ENCODE measurements at regions of chr3 and their contacts with region 1.

Region 1: DNA sequence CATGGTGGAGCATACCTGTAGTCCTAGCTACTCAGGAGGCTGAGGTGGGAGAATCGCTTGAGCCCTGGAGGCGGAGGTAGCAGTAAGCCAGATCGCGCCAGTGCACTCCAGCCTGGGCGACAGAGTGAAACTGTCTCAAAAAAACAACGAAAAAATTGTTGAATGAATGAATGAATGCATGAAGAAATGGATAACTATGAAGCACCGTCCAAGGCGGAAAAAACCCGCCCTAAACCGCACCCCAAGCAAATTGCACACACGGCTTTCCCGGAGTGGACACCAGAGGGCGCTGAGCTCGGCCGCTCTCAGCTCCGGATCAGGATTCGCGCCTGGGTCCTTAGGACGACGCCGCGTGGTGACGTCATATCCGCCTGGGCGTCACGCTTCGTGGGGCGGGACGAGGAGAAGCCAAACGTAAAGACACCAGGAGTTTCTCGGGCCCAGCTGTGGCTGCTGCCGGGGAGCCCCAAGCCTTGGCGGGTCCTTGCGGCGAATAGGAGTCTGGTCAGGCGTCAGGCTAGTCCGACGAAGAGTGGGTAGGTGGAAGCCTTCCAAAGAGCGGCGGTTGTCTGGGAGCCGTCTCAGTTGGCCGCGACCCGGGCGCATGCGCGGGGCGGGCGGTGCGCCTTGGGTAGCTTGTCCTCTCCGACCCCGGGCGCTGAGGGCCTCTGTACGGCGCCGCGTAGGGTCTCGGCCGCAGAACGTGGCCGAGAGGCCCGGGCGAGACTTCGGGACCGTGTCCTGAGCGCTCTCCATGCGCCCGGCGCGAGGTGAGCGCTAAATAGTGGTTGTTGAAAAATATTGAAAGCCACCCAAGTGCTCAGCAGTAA is at the starts of genes HTD2 and RPP14:
- DNase-seq: peak; percentile 97
- ATAC-seq: peak; percentile 88
- H3K4me3 Mint-ChIP-seq: peak within 1 kb of the TSS; percentile 98
- H3K27ac Mint-ChIP-seq: peak within 1 kb of the TSS; percentile 99
- H3K4me1 Mint-ChIP-seq: peaks cover 29% of the 10 kb centered on the region
- H3K27me3 Mint-ChIP-seq: peaks cover 3% of the 10 kb centered on the region
- CTCF ChIP-seq: no peak
- total RNA-seq, gene HTD2: 11.4 TPM in 2 replicates
- total RNA-seq, gene RPP14: 17.5 and 17.7 TPM in 2 replicates

Region 2: DNA sequence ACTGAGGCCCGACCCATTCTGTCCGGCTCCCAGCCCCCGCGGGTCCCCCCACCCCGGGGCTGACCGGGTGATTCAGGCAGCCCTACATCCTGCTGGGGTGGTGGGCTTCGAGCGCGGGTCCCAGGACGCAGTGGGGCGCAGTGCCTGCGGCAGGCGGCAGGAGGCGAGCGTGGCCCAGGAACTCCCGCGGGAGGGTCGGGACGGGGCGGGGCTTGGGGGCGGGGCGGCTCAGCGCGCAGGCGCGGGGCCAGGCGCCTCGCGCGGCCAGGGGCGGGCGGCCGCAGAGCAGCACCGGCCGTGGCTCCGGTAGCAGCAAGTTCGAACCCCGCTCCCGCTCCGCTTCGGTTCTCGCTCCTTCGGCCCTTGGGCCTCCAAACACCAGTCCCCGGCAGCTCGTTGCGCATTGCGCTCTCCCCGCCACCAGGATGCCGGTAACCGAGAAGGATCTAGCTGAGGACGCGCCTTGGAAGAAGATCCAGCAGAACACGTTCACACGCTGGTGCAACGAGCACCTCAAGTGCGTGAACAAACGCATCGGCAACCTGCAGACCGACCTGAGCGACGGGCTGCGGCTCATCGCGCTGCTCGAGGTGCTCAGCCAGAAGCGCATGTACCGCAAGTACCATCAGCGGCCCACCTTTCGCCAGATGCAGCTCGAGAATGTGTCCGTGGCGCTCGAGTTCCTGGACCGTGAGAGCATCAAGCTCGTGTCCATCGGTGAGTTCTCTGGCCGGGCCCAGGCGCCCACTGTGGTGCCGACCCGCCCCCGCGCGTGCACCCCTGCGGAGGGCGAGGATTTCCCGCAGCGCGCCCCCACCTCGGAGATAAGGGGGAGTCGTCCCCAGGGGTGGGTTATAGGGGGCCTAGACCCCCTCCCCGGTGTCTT is 297.7 kb before region 1 on chr3 and contains the start of gene FLNB:
- CTCF ChIA-PET with region 1: no interaction called
- POLR2A ChIA-PET with region 1: no interaction called
- intact Hi-C with region 1: loop called (anchors 5 kb)
- DNase-seq: peak; percentile 72
- ATAC-seq: peak; percentile 93
- H3K4me3 Mint-ChIP-seq: peak within 1 kb of the TSS; percentile 95
- H3K27ac Mint-ChIP-seq: peak within 1 kb of the TSS; percentile 73
- H3K4me1 Mint-ChIP-seq: peaks cover 16% of the 10 kb centered on the region
- H3K27me3 Mint-ChIP-seq: no peaks in the 10 kb centered on the region
- CTCF ChIP-seq: no peak
- total RNA-seq, gene FLNB: 13.4 and 16.7 TPM in 2 replicates

Region 3: DNA sequence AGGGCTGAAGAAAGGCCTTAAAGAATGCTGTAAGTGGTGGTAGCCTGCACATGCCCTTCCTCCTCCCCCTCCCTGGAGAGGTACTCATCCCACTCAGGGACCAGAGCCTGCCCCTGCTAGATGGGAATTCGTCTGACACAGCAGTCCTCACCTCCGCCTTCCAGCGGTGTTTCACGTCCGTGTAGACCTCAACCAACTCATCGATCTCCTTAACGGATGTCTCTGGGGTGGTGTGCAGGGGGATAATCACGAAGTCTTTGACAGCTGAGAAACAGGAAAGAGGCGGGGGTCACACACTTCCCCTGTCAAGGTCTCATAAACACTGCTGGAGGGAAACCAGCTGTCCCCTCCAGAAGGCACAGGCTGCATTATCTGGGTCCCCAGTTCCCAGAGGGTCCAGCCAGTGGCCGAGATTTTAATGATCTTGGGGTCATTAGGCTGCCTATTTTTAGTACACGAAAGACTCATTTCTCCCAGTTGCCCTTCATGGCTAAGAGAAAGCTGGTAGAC is 105.2 kb before region 1 on chr3:
- CTCF ChIA-PET with region 1: interaction called, 11 read pairs
- POLR2A ChIA-PET with region 1: interaction called, 21 read pairs
- intact Hi-C with region 1: no loop called
- DNase-seq: no peak
- ATAC-seq: no peak
- H3K4me3 Mint-ChIP-seq: peak overlapping the region; percentile 64
- H3K27ac Mint-ChIP-seq: peak overlapping the region; percentile 70
- H3K4me1 Mint-ChIP-seq: peaks cover 66% of the 10 kb centered on the region
- H3K27me3 Mint-ChIP-seq: no peaks in the 10 kb centered on the region
- CTCF ChIP-seq: no peak

Region 4: DNA sequence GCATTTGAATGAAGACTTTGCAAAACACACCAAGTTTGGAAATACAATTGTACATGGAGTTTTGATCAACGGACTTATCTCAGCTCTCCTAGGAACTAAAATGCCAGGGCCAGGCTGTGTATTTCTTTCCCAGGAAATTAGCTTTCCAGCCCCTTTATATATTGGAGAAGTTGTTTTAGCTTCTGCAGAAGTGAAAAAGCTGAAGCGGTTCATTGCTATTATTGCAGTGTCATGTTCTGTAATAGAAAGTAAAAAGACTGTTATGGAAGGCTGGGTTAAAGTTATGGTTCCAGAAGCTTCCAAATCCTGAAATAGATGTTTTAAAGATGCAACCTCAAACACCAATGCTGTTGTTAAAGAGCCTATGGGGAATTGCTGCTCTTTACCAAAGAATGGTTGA is 11.7 kb after region 1 on chr3:
- CTCF ChIA-PET with region 1: interaction called, 30 read pairs
- POLR2A ChIA-PET with region 1: interaction called, 12 read pairs
- intact Hi-C with region 1: loop called (anchors 1 kb)
- DNase-seq: no peak
- ATAC-seq: no peak
- H3K4me3 Mint-ChIP-seq: no peak overlapping the region
- H3K27ac Mint-ChIP-seq: no peak overlapping the region
- H3K4me1 Mint-ChIP-seq: peaks cover 5% of the 10 kb centered on the region
- H3K27me3 Mint-ChIP-seq: no peaks in the 10 kb centered on the region
- CTCF ChIP-seq: no peak

Region 5: DNA sequence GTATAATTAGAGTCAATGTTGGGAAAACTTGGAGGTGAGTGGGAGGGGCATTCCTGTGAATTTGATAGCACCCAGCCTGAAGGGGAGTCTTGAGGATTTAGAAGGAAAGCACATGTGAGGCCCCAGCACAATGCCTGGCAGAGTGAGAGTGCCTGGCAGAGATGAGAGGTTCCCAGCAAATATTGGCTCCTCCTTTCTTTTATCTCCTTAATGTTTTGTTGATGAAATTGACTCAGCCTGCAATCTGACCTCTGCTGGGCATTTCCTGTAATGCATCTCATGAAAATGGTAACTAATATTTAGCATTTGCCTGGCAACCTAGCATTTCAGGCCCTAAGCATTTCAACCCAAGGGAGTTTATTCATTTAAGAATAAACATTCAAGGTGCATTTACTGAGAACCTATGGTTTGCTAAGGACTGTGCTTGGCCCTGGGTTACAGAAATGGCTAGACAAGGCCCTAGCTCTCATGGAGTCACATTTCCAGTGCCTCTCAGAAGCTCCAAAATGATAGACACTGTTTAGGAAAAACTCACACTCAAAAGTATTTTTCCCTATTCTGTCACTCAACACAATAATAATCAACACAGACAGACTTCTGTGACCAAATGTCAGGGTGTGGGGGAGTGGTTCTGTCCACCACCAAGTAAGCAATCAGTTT is 108.6 kb after region 1 on chr3:
- CTCF ChIA-PET with region 1: interaction called, 23 read pairs
- POLR2A ChIA-PET with region 1: interaction called, 5 read pairs
- intact Hi-C with region 1: loop called (anchors 1 kb)
- DNase-seq: no peak
- ATAC-seq: peak; percentile 81
- H3K4me3 Mint-ChIP-seq: no peak overlapping the region
- H3K27ac Mint-ChIP-seq: no peak overlapping the region
- H3K4me1 Mint-ChIP-seq: peaks cover 48% of the 10 kb centered on the region
- H3K27me3 Mint-ChIP-seq: no peaks in the 10 kb centered on the region
- CTCF ChIP-seq: peak; percentile 55

Region 6: DNA sequence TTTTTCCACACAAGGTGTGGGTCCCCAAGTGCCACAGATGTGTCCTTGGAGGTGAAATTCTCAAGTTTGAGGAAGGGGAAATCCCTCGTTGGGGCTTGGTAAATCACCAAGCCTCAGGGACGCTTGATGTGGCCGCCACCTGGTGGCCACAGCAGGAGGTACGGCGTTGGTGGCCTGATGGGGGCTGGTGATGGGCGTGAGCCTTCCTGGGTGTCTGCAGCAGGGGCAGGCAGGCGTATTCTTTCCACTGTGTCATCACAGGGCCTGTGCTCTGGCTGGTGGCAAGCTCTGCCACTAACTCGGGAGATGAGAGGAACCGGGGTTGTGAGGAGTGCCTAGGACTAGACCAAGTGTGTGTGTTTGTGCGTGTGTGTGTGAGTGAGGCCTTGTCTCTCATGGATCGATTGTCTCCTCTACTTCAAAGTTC is 226.7 kb after region 1 on chr3:
- CTCF ChIA-PET with region 1: interaction called, 39 read pairs
- POLR2A ChIA-PET with region 1: no interaction called
- intact Hi-C with region 1: loop called (anchors 1 kb)
- DNase-seq: peak; percentile 75
- ATAC-seq: peak; percentile 100
- H3K4me3 Mint-ChIP-seq: no peak overlapping the region
- H3K27ac Mint-ChIP-seq: no peak overlapping the region
- H3K4me1 Mint-ChIP-seq: peaks cover 7% of the 10 kb centered on the region
- H3K27me3 Mint-ChIP-seq: no peaks in the 10 kb centered on the region
- CTCF ChIP-seq: no peak